Activated CD4-positive, alpha-beta T cell treated with anti-CD3 and anti-CD28 coated beads, Interleukin-2, amount 10 ng/mL, durations not matched to agents 7 days and 5 days (primary cell): ENCODE measurements at regions of chr1 and their contacts with region 1.

Region 1: DNA sequence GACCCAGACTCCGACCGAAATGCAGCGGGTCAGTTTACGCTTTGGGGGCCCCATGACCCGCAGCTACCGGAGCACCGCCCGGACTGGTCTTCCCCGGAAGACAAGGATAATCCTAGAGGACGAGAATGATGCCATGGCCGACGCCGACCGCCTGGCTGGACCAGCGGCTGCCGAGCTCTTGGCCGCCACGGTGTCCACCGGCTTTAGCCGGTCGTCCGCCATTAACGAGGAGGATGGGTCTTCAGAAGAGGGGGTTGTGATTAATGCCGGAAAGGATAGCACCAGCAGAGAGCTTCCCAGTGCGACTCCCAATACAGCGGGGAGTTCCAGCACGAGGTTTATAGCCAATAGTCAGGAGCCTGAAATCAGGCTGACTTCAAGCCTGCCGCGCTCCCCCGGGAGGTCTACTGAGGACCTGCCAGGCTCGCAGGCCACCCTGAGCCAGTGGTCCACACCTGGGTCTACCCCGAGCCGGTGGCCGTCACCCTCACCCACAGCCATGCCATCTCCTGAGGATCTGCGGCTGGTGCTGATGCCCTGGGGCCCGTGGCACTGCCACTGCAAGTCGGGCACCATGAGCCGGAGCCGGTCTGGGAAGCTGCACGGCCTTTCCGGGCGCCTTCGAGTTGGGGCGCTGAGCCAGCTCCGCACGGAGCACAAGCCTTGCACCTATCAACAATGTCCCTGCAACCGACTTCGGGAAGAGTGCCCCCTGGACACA is 534 bp downstream of the C1orf56 start:
- DNase-seq: peak; percentile 63
- H3K4me3 Mint-ChIP-seq: peak overlapping the region; percentile 80
- H3K27ac Mint-ChIP-seq: peak overlapping the region; percentile 84
- H3K4me1 Mint-ChIP-seq: peaks cover 56% of the 10 kb centered on the region
- H3K27me3 Mint-ChIP-seq: no peaks in the 10 kb centered on the region

Region 2: GRCh38 chr1:150846473-150847146 is 201.5 kb before region 1 on chr1:
- CTCF ChIA-PET with region 1: no interaction called
- POLR2A ChIA-PET with region 1: no interaction called
- DNase-seq: no peak
- H3K4me3 Mint-ChIP-seq: no peak overlapping the region
- H3K27ac Mint-ChIP-seq: no peak overlapping the region
- H3K4me1 Mint-ChIP-seq: peaks cover 24% of the 10 kb centered on the region
- H3K27me3 Mint-ChIP-seq: no peaks in the 10 kb centered on the region

Region 3: DNA sequence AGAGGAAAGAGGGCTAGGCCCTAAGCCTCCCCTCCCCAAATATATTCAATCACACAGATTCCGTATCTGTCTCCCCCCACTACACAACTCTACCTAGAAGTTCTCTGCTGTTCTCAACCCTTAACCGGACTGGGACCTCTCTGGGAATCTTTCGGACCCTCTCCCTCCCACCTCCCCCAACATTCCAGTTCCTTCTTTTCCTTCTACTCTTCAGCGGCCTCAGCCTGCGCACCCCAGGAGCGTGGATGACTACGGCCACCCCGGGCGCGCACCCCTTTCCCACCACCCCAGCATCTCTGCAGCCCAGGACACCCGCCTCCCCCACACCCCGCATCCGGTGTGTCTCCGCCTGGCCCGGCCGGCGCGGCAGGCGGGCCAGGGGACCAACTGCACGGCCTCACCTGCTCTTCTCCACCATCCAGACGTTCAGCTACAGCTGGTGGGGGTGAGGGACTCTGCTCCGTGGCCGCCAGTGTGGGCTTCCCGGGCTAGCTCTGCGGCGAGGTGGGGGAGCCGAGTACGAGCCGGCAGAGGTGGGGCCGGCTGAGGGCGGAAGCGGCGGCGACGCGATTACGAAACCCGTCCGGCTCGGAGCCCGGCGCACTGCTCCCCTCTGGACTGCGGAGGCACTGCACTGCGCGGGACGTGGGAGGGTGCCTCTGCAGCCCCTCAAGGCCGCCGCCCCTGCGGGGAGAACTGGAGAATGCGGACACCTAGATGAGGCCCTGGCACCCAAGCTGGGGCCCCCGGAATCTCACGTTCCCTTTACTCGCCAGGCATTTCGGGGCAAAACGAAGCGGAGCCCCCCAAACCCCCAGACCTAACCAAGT is 11.2 kb after region 1 on chr1 and contains the start of gene CDC42SE1:
- CTCF ChIA-PET with region 1: interaction called, 13 read pairs
- POLR2A ChIA-PET with region 1: no interaction called
- DNase-seq: peak; percentile 85
- H3K4me3 Mint-ChIP-seq: peak within 1 kb of the TSS; percentile 99
- H3K27ac Mint-ChIP-seq: peak within 1 kb of the TSS; percentile 96
- H3K4me1 Mint-ChIP-seq: peaks cover 56% of the 10 kb centered on the region
- H3K27me3 Mint-ChIP-seq: no peaks in the 10 kb centered on the region
- total RNA-seq, gene CDC42SE1: 350 to 360 TPM

Region 4: DNA sequence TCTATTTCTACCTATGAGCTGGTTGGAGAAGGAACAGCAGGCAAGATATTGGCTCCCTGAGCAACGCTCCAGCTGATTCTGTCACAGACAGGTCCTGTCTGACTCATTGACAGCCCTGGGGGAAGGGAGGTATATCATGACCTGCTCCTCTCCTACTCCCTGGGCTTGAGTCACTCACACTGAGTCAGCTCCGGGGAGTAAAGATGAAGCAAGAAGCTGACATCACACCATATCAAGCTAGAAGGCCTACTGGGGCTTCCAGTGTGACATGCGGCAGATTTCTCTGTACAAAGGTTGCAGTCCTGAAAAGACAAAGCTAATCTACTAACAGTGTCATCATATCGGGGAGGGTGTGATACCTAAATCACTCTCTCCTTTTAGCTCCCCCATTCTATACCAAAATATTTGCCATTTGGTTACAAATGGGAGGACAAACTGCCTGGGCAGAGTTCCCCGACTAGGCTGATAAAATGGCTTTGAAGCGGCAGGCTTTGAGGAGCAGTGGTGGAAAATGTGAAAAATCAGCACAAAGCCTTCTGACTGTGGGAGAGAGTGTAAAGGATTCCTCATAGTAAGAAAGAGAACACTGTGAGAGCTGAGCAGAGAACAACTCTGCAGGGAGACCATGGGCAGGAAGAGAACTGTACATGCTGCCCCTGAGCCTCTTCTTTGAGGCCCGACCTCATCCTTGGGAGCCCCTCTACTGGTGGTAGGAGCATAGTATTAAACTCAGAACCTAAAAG is 263.7 kb after region 1 on chr1:
- CTCF ChIA-PET with region 1: no interaction called
- POLR2A ChIA-PET with region 1: interaction called, 12 read pairs
- DNase-seq: peak; percentile 45
- H3K4me3 Mint-ChIP-seq: no peak overlapping the region
- H3K27ac Mint-ChIP-seq: peak overlapping the region; percentile 7
- H3K4me1 Mint-ChIP-seq: peaks cover 23% of the 10 kb centered on the region
- H3K27me3 Mint-ChIP-seq: no peaks in the 10 kb centered on the region